Naive thymus-derived CD4-positive, alpha-beta T cell (primary cell): ENCODE measurements at regions of chr10 and their contacts with region 1.

Region 1: GRCh38 chr10:32680803-32681557 is 235.0 kb downstream of the CCDC7 start:
- DNase-seq: no peak
- ATAC-seq: no peak
- H3K4me3 ChIP-seq: no peak overlapping the region
- H3K4me3 Mint-ChIP-seq: no peak overlapping the region
- H3K27ac ChIP-seq: no peak overlapping the region
- H3K27ac Mint-ChIP-seq: no peak overlapping the region
- H3K4me1 ChIP-seq: no peaks in the 10 kb centered on the region
- H3K4me1 Mint-ChIP-seq: peaks cover 0 to 3% (median 0%) of the 10 kb centered on the region in 7 donors
- H3K27me3 ChIP-seq: no peaks in the 10 kb centered on the region
- H3K27me3 Mint-ChIP-seq: no peaks in the 10 kb centered on the region

Region 2: GRCh38 chr10:32629910-32630309 is 51.1 kb before region 1 on chr10:
- CTCF ChIA-PET with region 1: no interaction called
- POLR2A ChIA-PET with region 1: no interaction called
- intact Hi-C with region 1: loop called in 1 of 2 experiments (anchors 10 kb)
- DNase-seq: no peak
- ATAC-seq: no peak
- H3K4me3 ChIP-seq: no peak overlapping the region
- H3K4me3 Mint-ChIP-seq: no peak overlapping the region
- H3K27ac ChIP-seq: no peak overlapping the region
- H3K27ac Mint-ChIP-seq: no peak overlapping the region
- H3K4me1 ChIP-seq: no peaks in the 10 kb centered on the region
- H3K4me1 Mint-ChIP-seq: peaks cover 0 to 8% (median 4%) of the 10 kb centered on the region in 7 donors
- H3K27me3 ChIP-seq: no peaks in the 10 kb centered on the region
- H3K27me3 Mint-ChIP-seq: no peaks in the 10 kb centered on the region